Activated CD4-positive, alpha-beta T cell treated with anti-CD3 and anti-CD28 coated beads, Interleukin-2, amount 10 ng/mL, durations not matched to agents 7 days and 5 days (primary cell): ENCODE measurements at regions of chr6 and their contacts with region 1.

Region 1: DNA sequence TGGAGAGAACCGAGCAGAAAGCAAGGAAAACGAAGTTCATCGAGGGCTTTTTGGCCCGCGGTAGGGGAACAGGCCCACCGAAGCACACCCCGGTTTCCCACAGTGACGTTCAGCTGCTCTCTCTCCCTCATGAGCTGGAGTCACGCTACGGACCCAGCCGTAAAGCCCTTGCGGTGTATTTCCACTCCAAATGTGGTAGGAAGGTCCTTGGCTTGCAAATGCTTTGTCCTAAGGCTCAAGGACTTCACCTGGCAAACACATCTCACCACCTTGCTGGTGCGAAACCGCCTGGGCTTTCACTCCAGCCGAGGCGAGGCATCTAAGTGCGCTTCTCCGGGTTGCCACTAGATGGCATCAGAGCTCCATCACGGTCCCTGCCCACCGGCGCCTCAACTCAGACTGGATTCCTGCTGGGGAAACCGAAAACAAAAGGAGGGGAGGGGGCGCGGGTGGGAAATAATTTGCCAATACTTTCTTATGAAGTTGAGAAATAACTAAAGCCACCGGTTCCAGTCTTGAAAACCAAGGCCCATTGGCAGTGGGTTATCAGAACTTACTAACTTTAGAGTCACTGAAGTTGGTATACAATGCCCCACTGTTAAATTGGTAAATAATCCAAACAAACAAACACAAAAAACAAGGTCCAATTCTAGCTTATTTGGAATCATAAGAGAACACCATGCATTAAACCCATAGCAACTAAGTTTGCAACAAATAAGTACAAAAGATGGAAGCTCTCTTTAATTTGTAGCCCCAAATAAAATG is 13.4 kb upstream of the FOXC1 start:
- DNase-seq: peak; percentile 69
- H3K4me3 Mint-ChIP-seq: no peak overlapping the region
- H3K27ac Mint-ChIP-seq: no peak overlapping the region
- H3K4me1 Mint-ChIP-seq: peaks cover 8% of the 10 kb centered on the region
- H3K27me3 Mint-ChIP-seq: peaks cover 60% of the 10 kb centered on the region

Region 2: DNA sequence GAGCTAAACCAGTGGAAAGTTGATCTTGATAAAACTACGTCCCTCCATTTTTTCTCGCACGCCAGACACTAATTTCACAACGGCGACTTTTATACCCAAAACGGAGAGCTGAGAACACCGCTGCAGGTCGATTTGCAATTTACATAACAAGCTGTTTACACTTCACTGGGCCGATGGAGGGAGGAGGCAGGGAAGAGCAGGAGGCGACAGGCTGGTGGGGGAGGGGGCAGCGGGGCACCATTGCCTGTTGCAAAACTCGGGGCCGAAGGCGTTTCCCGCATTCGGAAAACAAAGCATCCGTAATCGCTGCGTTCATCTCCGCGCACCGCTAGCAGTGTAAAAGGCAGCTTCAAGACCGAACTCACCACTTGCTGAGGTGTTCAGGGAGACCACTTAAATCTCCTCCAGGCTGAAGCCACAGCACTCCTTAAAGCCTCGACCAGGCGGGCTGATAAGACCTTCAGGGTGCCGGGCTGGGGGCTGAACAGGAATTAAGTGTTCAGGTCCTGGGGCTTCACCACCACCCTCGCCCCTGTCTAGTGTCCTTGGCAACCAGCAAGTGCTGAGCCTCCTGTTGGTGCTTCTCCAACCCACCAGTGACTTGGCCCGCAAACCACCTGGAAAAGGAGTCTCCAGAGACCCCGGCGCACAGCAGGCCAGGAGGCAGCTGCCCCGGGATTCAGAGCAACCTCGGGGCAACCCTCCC is 11.4 kb after region 1 on chr6:
- CTCF ChIA-PET with region 1: interaction called, 10 read pairs
- POLR2A ChIA-PET with region 1: no interaction called
- DNase-seq: no peak
- H3K4me3 Mint-ChIP-seq: peak overlapping the region; percentile 38
- H3K27ac Mint-ChIP-seq: peak overlapping the region; percentile 76
- H3K4me1 Mint-ChIP-seq: peaks cover 37% of the 10 kb centered on the region
- H3K27me3 Mint-ChIP-seq: peaks cover 63% of the 10 kb centered on the region

Region 3: GRCh38 chr6:1796706-1797529 is 200.6 kb after region 1 on chr6:
- CTCF ChIA-PET with region 1: no interaction called
- POLR2A ChIA-PET with region 1: no interaction called
- DNase-seq: no peak
- H3K4me3 Mint-ChIP-seq: no peak overlapping the region
- H3K27ac Mint-ChIP-seq: no peak overlapping the region
- H3K4me1 Mint-ChIP-seq: peaks cover 12% of the 10 kb centered on the region
- H3K27me3 Mint-ChIP-seq: no peaks in the 10 kb centered on the region

Region 4: GRCh38 chr6:2353412-2354137 is 757.3 kb after region 1 on chr6:
- CTCF ChIA-PET with region 1: interaction called, 10 read pairs
- POLR2A ChIA-PET with region 1: no interaction called
- DNase-seq: peak; percentile 69
- H3K4me3 Mint-ChIP-seq: no peak overlapping the region
- H3K27ac Mint-ChIP-seq: no peak overlapping the region
- H3K4me1 Mint-ChIP-seq: no peaks in the 10 kb centered on the region
- H3K27me3 Mint-ChIP-seq: peaks cover 2% of the 10 kb centered on the region

Region 5: GRCh38 chr6:2376429-2377355 is 780.4 kb after region 1 on chr6:
- CTCF ChIA-PET with region 1: no interaction called
- POLR2A ChIA-PET with region 1: no interaction called
- DNase-seq: no peak
- H3K4me3 Mint-ChIP-seq: no peak overlapping the region
- H3K27ac Mint-ChIP-seq: no peak overlapping the region
- H3K4me1 Mint-ChIP-seq: no peaks in the 10 kb centered on the region
- H3K27me3 Mint-ChIP-seq: no peaks in the 10 kb centered on the region

Region 6: DNA sequence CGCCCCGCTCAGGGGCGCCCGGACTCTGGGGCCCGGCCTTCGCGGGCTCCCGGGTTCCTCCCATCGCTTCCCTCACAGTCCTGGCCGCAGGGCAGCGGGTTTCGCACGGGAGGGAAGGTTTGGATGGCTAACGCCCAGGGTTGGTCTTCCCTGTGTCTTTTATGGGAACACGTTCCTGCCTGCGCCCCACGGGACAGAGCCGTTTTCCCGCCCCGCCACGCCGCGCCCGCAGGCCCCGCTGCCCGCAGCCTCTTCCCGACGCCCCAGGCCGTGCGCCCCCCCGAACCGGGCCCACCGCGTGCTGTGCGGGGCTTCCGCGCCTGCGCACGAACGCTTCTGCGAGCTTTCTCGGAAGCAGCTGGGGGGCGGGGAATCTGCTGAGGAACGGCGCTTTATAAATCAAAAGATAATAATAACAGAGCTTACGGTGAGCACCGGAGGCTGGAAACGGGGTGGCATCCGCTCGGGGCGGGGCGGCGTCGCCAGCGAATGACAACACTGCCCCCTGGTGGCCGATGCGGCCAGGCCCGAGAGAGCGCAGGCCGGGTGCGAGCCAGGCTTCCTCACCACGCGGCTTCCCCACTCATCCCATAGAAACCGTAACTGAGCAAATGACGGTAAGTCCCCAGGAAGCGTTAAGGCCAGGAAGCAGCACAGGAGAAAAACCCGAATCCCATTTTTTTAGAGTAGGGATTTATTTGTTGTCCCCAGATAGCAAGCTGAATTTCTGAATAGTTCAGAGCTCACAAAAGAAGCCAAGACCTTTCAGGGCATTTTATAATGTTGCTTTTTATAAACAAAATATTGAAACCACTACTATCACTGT is 1038.1 kb after region 1 on chr6:
- CTCF ChIA-PET with region 1: interaction called, 11 read pairs
- POLR2A ChIA-PET with region 1: no interaction called
- DNase-seq: peak; percentile 82
- H3K4me3 Mint-ChIP-seq: peak overlapping the region; percentile 63
- H3K27ac Mint-ChIP-seq: no peak overlapping the region
- H3K4me1 Mint-ChIP-seq: peaks cover 3% of the 10 kb centered on the region
- H3K27me3 Mint-ChIP-seq: peaks cover 8% of the 10 kb centered on the region